WTC11 (cell line): ENCODE measurements at regions of chr13 and their contacts with region 1.

Region 1: DNA sequence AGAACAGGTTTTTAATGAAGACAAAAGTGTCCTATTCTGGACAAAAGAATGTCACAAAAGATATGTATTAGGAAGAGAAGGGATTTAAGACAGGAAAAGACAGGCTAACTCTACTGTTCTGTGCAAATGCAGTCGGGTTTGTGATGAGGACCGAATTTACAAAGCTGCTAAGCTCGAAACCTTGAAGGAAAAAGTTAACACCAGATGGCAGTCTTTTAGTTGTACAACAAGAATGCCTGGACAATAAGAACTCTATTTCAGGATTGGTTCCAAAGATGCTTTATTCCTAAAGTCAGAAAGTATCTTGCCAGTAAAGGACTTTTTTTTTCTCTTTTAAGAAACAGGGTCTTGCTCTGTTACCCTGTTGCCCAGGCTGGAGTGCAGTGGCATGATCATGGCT is 51.1 kb downstream of the HS6ST3 start:
- DNase-seq: no peak
- ATAC-seq: 0 out of 2 replicates have a peak, but pooled peaks have one; percentile 20
- H3K4me3 Mint-ChIP-seq: no peak overlapping the region
- H3K27ac Mint-ChIP-seq: no peak overlapping the region
- H3K4me1 Mint-ChIP-seq: no peaks in the 10 kb centered on the region
- H3K27me3 Mint-ChIP-seq: no peaks in the 10 kb centered on the region
- CTCF ChIP-seq: no peak

Region 2: GRCh38 chr13:95931300-95932025 is 209.6 kb before region 1 on chr13:
- CTCF ChIA-PET with region 1: no interaction called
- POLR2A ChIA-PET with region 1: no interaction called
- DNase-seq: no peak
- ATAC-seq: no peak
- H3K4me3 Mint-ChIP-seq: no peak overlapping the region
- H3K27ac Mint-ChIP-seq: no peak overlapping the region
- H3K4me1 Mint-ChIP-seq: no peaks in the 10 kb centered on the region
- H3K27me3 Mint-ChIP-seq: no peaks in the 10 kb centered on the region; the same call in 1 of the 2 replicates
- CTCF ChIP-seq: no peak

Region 3: DNA sequence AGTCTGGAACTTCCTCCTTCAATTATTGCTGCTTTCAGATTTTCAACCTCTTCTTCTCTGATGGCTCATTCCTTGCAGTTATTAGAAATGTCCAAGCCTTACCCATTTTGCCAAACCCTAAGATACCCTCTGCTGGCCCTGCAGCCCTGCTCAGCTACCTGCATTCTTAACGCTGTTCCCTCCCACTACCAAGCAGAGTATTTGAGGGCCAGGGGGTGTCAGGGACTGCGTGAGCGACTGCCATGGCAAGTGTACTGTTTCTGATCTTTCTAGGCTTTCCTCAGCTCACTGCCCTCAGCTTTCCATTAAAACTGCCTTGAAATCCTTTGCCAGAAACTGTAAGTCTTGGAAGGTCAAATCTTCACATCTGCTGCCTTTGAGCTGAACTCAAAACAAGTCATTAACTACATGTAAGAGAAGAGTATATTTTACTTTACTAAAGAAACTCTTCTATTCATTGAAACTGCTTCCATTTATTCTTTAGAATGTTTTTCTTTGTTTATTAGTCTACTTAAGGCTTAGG is 10.1 kb before region 1 on chr13:
- CTCF ChIA-PET with region 1: interaction called, 12 read pairs
- POLR2A ChIA-PET with region 1: no interaction called
- DNase-seq: peak; percentile 14
- ATAC-seq: peak; percentile 94
- H3K4me3 Mint-ChIP-seq: no peak overlapping the region
- H3K27ac Mint-ChIP-seq: no peak overlapping the region; the same call in 1 of the 2 replicates
- H3K4me1 Mint-ChIP-seq: peaks cover 13% of the 10 kb centered on the region
- H3K27me3 Mint-ChIP-seq: no peaks in the 10 kb centered on the region
- CTCF ChIP-seq: no peak

Region 4: GRCh38 chr13:96165840-96166239 is 24.8 kb after region 1 on chr13:
- CTCF ChIA-PET with region 1: no interaction called
- POLR2A ChIA-PET with region 1: no interaction called
- DNase-seq: no peak
- ATAC-seq: no peak
- H3K4me3 Mint-ChIP-seq: no peak overlapping the region
- H3K27ac Mint-ChIP-seq: no peak overlapping the region
- H3K4me1 Mint-ChIP-seq: no peaks in the 10 kb centered on the region
- H3K27me3 Mint-ChIP-seq: no peaks in the 10 kb centered on the region
- CTCF ChIP-seq: no peak

Region 5: DNA sequence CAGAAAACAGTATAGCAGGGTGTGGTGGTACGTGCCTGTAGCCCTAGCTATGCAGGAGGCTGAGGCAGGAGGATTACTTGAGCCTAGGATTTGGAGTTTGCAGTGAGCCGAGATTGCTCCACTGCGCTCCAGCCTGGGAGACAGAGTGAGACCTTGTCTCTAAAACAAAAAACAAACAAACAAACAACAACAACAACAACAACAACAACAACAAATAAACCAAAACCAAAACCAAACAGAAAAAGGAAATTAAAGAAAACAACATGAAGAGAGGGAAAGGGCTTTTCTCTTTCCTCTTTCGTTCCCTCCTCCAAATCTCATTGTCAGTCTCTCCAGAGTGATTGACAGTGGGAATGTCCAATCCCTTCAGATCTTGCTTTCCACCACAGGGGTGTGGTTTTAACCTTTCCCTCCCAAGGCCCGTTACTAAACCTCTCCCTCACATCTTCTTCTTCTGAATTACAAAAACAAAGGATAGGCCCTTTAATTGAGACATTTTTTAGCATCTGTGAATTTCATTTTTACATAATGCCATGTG is 290.1 kb after region 1 on chr13:
- CTCF ChIA-PET with region 1: no interaction called
- POLR2A ChIA-PET with region 1: no interaction called
- DNase-seq: no peak
- ATAC-seq: no peak
- H3K4me3 Mint-ChIP-seq: no peak overlapping the region
- H3K27ac Mint-ChIP-seq: no peak overlapping the region
- H3K4me1 Mint-ChIP-seq: no peaks in the 10 kb centered on the region
- H3K27me3 Mint-ChIP-seq: no peaks in the 10 kb centered on the region
- CTCF ChIP-seq: no peak